ENCODE measurements at regions of chr19 and their contacts with region 1.

Region 1: GRCh38 chr19:10846500-10847202 is 1.6 kb upstream of the C19orf38 start:
- DNase-seq: no peak
- H3K4me3 ChIP-seq: no peak overlapping the region
- H3K4me3 Mint-ChIP-seq: no peak overlapping the region
- H3K27ac ChIP-seq: no peak overlapping the region
- H3K27ac Mint-ChIP-seq: no peak overlapping the region
- H3K4me1 ChIP-seq: no peaks in the 10 kb centered on the region
- H3K4me1 Mint-ChIP-seq: no peaks in the 10 kb centered on the region
- H3K27me3 ChIP-seq: no peaks in the 10 kb centered on the region
- H3K27me3 Mint-ChIP-seq: peaks cover 8 to 10% of the 10 kb centered on the region in 2 donors

Region 2: DNA sequence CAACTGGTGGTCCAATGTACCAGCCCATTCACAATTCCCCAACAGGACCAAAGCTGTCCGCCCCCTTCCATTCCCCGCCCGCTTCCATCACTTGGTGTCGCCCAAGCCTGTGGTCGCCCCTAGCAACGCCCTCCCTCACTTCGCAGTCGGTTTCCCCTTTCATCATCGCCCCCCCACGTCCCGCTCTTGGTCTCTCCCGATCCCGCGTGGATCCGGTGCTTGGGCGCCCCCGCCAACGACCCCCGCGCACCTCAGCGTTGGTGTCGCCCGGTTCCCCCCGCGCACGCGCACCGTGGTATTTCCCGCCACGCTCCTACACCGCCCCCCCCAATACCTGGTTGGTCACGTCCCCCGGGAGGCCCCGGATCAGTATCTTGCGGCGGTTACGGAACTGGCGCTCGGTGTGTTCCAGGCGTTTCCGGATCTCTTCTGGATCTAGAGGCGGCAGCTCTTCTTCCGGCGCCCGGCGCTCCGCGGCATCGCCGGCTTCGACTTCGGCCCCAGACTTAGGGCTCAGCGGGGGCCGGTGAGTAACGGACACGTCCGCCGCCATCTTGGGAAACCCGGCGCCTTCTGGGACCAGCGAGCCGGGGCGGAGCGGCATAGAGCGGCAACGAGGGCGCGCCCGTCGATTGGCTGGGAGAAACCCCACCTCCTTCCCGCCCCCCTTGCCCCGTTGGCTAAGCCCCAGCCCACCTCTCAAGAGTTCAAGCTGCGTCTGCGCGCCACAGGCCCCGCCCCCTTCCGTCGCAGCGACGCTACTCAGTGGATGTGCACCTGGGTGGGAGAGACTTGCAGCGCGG is 513.5 kb before region 1 on chr19 and contains the start of gene RAVER1:
- CTCF ChIA-PET with region 1: no interaction called
- POLR2A ChIA-PET with region 1: interaction called, 14 read pairs
- DNase-seq: peak; percentile 96 to 99 (median 98)
- H3K4me3 ChIP-seq: peak within 1 kb of the TSS; percentile 93
- H3K4me3 Mint-ChIP-seq: peak within 1 kb of the TSS; percentile 90 to 99 (median 96)
- H3K27ac ChIP-seq: peak within 1 kb of the TSS; percentile 84
- H3K27ac Mint-ChIP-seq: peak within 1 kb of the TSS; percentile 90 to 98 (median 95)
- H3K4me1 ChIP-seq: peaks cover 26% of the 10 kb centered on the region
- H3K4me1 Mint-ChIP-seq: peaks cover 19 to 47% (median 26%) of the 10 kb centered on the region in 3 donors
- H3K27me3 ChIP-seq: no peaks in the 10 kb centered on the region
- H3K27me3 Mint-ChIP-seq: no peaks in the 10 kb centered on the region
- total RNA-seq, gene RAVER1: 91.5 to 98.5 TPM

Region 3: DNA sequence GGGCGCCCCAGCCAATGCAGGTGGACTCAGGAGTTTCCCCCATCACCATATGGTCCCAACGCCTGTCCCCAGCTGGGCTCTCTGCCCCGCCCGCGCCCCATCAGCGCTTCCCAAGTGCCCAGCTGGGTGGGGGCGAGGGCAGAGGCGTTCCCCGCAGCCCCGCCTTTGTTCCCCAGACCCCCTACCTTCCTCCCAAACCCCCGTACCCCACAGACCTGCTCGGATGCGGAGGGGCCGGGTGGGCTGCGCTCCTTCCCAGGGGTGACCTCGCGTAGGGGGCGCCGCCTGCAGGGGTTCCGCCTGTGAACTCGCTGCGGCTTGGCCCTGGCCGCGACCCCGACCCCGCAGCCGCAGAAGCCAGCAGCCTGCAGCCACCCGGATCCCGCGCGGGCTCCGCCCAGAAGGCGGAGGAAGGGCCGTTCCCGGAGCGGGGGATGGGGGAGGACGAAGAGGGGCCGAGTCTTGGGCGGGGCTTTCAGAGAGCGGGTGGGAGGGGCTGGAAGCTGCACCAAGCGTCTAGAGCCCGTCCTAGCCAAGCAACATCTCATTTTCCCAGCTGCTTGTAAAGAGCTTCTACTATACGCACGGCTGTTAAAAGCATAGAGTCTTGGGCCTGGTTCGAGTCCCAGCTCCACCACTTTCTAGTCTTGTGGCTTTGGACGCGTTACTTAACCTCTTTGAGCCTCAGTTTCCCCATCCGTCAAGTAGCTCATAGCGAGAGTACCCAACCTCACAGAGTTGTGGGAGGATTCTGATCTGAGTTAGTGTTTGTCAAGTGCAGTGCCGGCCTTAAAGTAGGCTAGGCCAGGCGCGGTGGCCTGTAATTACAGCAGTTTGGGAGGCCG is 492.8 kb after region 1 on chr19 and contains the start of gene RAB3D:
- CTCF ChIA-PET with region 1: no interaction called
- POLR2A ChIA-PET with region 1: no interaction called
- DNase-seq: peak; percentile 48 to 79 (median 62)
- H3K4me3 ChIP-seq: peak within 1 kb of the TSS; percentile 51
- H3K4me3 Mint-ChIP-seq: peak within 1 kb of the TSS; percentile 73 to 90 (median 80)
- H3K27ac ChIP-seq: peak within 1 kb of the TSS; percentile 31
- H3K27ac Mint-ChIP-seq: peak within 1 kb of the TSS; percentile 46 to 87 (median 76)
- H3K4me1 ChIP-seq: peaks cover 26% of the 10 kb centered on the region
- H3K4me1 Mint-ChIP-seq: peaks cover 20 to 33% (median 27%) of the 10 kb centered on the region in 3 donors
- H3K27me3 ChIP-seq: no peaks in the 10 kb centered on the region
- H3K27me3 Mint-ChIP-seq: peaks cover 0 to 2% of the 10 kb centered on the region in 2 donors
- total RNA-seq, gene RAB3D: 3.2 to 4.5 TPM

Measured in CD8-positive, alpha-beta memory T cell (primary cell).